ENCODE measurements at regions of chr3 and their contacts with region 1.

Region 1: GRCh38 chr3:124620600-124621063 is 109.6 kb upstream of the UMPS start:
- DNase-seq: peak; percentile 73 to 86
- H3K4me3 ChIP-seq: peak overlapping the region; percentile 16
- H3K4me3 Mint-ChIP-seq: peak overlapping the region; percentile 66
- H3K27ac Mint-ChIP-seq: peak overlapping the region; percentile 92
- H3K4me1 ChIP-seq: peaks cover 77% of the 10 kb centered on the region
- H3K4me1 Mint-ChIP-seq: peaks cover 52% of the 10 kb centered on the region
- H3K27me3 ChIP-seq: no peaks in the 10 kb centered on the region
- H3K27me3 Mint-ChIP-seq: no peaks in the 10 kb centered on the region
- CTCF ChIP-seq: no peak

Region 2: DNA sequence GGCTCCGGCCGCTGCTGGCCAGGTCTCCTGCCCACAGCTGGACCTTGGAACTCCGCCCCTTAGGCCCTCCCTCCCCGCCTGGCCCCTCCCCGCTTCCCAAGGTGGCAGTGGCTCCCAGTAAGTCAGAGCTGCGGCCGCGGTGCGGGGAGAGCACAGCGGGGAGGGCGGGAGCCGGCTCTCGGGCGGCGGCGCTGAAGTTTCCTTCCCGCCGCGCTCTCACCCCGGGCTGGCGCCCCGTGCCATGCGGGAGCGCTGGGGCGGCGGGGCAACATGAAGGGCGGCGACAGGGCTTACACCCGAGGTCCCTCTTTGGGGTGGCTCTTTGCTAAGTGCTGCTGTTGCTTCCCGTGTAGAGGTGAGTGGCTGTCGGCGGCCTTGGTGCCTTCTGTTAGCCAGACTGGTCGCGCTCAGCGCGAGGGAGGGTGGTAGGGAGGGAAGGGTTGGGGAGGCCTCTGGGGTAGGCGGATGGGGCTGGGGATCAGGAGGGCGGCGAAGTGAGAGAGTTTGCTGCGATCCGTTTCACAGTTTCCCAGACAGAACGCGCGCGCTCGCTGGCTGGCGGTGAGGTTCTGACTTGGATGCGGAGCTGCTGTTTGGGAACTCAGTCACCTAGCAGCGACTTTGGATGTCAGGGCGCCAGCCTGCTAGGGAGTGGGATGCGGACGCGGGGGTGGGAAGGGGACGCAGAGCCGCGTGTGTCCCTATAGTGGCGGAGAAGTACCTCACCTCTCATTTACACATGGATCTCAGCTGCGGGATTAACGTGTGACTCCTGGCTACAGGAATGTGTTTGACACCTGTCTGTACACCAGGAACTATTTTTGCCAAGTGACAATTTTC is 35.9 kb before region 1 on chr3:
- CTCF ChIA-PET with region 1: no interaction called
- POLR2A ChIA-PET with region 1: no interaction called
- intact Hi-C with region 1: loop called (anchors 1 kb)
- DNase-seq: peak; percentile 87 to 89
- H3K4me3 ChIP-seq: peak overlapping the region; percentile 47
- H3K4me3 Mint-ChIP-seq: peak overlapping the region; percentile 84
- H3K27ac Mint-ChIP-seq: peak overlapping the region; percentile 73
- H3K4me1 ChIP-seq: peaks cover 37% of the 10 kb centered on the region
- H3K4me1 Mint-ChIP-seq: peaks cover 21% of the 10 kb centered on the region
- H3K27me3 ChIP-seq: no peaks in the 10 kb centered on the region
- H3K27me3 Mint-ChIP-seq: no peaks in the 10 kb centered on the region
- CTCF ChIP-seq: no peak

Region 3: DNA sequence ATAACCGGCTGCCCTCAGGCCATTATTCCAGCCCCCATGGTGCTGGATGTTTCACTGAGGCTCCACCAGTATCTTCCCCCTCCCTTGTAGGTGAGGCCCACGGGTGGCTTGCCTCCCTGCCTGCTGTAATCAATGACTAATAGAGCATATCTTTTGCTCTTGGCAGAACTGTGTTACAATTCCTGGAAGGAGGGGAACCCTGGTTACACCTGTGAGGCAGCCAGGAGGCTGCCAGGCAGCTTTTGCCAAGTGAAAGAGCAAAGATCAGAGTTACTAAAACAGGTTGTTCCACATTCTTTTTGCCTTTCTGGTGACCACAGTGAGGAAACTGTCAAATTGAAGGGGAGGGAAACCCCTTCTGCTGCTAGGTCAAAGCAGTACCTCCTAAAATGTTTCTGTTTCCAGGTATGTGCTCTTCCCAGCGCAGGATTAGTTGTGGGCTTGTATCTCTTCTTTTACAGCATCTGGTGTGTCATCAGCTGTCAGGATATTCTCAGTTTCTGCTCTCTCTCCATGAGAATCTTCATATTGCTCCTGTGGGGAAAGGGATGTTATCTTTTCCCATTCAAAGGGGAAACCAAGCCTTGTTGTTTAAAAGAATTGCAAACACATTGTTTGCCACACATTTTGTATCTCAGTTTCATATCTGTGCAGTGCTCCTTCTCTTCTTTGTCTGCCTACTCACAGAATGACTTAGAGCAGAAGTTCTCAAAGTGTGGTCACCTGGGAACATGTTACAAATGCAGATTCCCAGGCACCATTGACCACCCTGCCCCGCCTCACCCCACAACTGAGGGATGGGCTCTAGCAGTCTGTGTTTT is 27.8 kb before region 1 on chr3:
- CTCF ChIA-PET with region 1: no interaction called
- POLR2A ChIA-PET with region 1: no interaction called
- intact Hi-C with region 1: loop called (anchors 1 kb)
- DNase-seq: peak; percentile 89 to 91
- H3K4me3 ChIP-seq: no peak overlapping the region
- H3K4me3 Mint-ChIP-seq: peak overlapping the region; percentile 69
- H3K27ac Mint-ChIP-seq: peak overlapping the region; percentile 95
- H3K4me1 ChIP-seq: peaks cover 70% of the 10 kb centered on the region
- H3K4me1 Mint-ChIP-seq: peaks cover 49% of the 10 kb centered on the region
- H3K27me3 ChIP-seq: no peaks in the 10 kb centered on the region
- H3K27me3 Mint-ChIP-seq: no peaks in the 10 kb centered on the region
- CTCF ChIP-seq: no peak

Region 4: DNA sequence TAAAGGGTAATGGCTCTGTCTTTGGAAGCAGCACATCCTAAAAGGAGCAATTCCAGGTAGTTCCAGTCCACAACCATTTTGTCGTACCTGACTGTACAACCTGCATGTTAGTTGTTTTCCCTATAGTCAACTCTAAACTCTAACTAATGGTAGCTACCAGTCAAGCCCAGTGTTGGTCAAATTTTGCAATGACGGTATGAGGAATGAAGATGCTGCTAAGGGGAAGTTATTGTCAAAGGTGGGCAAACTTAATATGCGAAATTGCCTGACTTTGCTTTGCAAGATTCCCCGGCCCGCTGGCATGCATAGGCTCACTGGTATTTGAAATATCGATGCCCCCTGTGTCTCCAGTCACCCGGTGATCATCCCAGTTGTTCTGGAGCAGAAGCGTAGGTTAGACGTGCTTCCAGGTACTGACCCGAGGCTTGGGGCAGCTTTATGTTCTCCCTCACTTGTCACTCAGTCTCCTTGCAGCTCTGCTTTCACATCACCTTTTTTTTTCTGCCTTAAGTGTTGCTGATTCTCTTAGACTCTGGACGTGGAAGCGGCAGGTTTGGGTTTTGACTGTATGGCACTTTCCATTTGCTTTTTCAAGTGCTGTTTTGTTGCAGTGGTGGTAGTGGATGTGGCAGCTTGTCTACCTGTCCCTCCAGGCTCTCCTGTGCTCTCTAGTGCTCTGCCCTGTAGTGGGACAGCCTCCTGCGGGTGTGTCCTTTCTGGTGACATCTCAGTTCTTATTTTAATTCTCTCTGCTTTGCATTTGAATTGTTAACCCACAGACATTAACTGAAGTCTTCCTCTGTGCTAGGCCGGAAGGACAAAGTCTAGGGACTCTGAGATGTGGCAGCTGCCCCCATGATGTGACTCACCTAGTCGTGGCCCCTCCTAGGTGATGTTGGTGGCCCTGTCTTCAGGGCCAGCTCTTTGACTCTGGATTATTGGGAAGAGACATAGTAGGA is 13.9 kb after region 1 on chr3:
- CTCF ChIA-PET with region 1: interaction called, 4 read pairs
- POLR2A ChIA-PET with region 1: interaction called, 3 read pairs
- intact Hi-C with region 1: loop called (anchors 2 kb)
- DNase-seq: peak; percentile 40 to 77
- H3K4me3 ChIP-seq: no peak overlapping the region
- H3K4me3 Mint-ChIP-seq: peak overlapping the region; percentile 45
- H3K27ac Mint-ChIP-seq: peak overlapping the region; percentile 76
- H3K4me1 ChIP-seq: peaks cover 96% of the 10 kb centered on the region
- H3K4me1 Mint-ChIP-seq: peaks cover 74% of the 10 kb centered on the region
- H3K27me3 ChIP-seq: no peaks in the 10 kb centered on the region
- H3K27me3 Mint-ChIP-seq: no peaks in the 10 kb centered on the region
- CTCF ChIP-seq: no peak

Region 5: GRCh38 chr3:124688581-124689454 is 68.2 kb after region 1 on chr3:
- CTCF ChIA-PET with region 1: interaction called, 5 read pairs
- POLR2A ChIA-PET with region 1: interaction called, 4 read pairs
- intact Hi-C with region 1: loop called (anchors 1 kb)
- DNase-seq: peak; percentile 83 to 84
- H3K4me3 ChIP-seq: no peak overlapping the region
- H3K4me3 Mint-ChIP-seq: peak overlapping the region; percentile 48
- H3K27ac Mint-ChIP-seq: peak overlapping the region; percentile 71
- H3K4me1 ChIP-seq: peaks cover 44% of the 10 kb centered on the region
- H3K4me1 Mint-ChIP-seq: peaks cover 53% of the 10 kb centered on the region
- H3K27me3 ChIP-seq: no peaks in the 10 kb centered on the region
- H3K27me3 Mint-ChIP-seq: no peaks in the 10 kb centered on the region
- CTCF ChIP-seq: peak; percentile 79 to 80